AG04449 (cell line): ENCODE measurements at regions of chr2 and their contacts with region 1.

Region 1: DNA sequence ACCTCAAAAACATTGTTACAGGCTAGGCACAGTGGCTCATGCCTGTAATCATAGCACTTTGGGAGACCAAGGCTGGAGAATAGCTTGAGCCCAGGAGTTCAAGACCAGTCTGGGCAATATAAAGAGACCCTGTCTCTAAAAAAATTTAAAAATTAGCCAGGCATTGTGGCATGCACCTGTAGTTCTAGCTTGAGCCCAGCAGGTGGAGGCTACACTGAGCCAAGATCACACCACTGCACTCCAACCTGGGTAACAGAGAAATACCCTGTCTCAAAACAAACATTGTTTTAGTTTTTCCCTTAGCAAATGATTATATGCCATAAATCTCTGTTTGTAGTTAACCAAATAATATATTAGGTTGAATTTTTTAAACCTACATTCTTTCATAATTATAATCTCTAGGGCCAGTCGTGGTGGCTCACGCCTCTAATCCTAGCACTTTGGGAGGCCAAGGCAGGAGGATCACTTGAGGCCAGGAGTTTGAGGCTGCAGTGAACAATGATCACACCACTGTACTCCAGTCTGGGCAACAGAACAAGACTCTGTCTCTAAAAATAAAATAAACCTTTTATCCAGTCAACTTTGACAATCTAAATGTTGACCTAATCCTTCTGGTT is 13.3 kb upstream of the CYP20A1 start:
- DNase-seq: no peak
- H3K4me3 ChIP-seq: no peak overlapping the region
- CTCF ChIP-seq: peak; percentile 64

Region 2: GRCh38 chr2:203238704-203239526 is 13.4 kb after region 1 on chr2 and contains the start of gene CYP20A1:
- CTCF ChIA-PET with region 1: interaction called, 15 read pairs
- POLR2A ChIA-PET with region 1: interaction called, 3 read pairs
- DNase-seq: peak; percentile 60
- H3K4me3 ChIP-seq: peak within 1 kb of the TSS; percentile 66
- CTCF ChIP-seq: peak; percentile 52

Region 3: DNA sequence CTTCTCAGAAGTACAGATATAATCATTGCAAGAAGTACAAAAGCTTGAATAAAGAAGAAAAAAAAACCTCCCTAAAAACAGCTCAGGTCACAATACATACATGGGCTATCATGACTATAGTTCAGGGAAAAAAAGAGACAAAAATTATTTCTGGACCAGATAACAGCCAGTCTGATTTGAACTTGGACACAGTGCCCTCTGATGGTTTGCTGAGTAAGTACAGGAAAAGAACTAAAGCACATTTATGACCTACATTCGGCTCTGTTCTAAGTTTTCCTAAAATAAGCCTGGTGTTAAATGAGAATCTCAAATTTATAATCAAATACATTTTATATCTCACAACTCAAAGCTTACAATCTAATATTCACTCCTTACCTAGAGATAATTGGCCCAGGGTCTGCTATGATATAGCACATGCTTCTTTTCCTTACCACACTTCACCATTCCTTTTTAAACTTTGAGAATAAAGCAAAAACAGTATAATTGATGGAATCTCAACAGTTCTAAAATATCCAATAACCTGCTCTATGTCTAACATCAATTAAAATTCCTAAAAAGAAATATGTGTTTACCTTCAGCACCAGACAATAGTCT is 228.4 kb after region 1 on chr2:
- CTCF ChIA-PET with region 1: interaction called, 11 read pairs
- POLR2A ChIA-PET with region 1: no interaction called
- DNase-seq: no peak
- H3K4me3 ChIP-seq: no peak overlapping the region
- CTCF ChIP-seq: peak; percentile 62

Region 4: DNA sequence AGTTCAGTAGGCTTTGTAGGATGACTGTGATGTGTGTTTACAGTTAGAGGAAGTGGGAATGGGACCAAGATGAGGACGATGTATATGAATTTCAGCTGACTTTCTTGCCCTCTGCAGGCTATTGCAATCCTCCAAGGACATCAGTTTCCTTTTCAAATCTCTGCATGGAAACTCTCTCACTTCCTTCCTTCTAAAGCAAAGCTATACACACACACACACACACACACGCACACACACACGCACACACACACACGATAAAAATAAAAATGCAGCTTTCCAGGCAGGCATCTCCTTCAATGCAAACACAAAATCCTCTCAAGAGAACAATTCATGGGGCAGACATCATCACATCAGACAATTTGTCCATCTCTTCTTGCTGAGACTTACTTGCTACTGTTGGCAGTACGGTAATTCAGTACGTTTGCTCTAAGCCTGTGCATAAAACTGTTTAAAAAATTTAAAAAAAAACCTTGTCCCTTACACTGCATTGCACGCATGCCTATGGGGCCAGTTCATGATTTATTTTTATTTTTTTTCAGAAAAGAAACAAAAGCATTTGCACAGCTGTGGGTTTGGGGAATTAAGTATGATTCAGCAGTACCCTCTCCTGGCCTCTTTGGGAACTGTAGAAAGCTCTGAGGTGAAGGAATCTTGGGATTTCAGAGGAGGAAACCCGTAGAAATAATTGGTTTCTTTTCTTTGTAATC is 683.9 kb after region 1 on chr2:
- CTCF ChIA-PET with region 1: interaction called, 13 read pairs
- POLR2A ChIA-PET with region 1: no interaction called
- DNase-seq: peak; percentile 41
- H3K4me3 ChIP-seq: peak overlapping the region; percentile 35
- CTCF ChIP-seq: peak; percentile 53